MCF 10A (cell line): ENCODE measurements at regions of chr1 and their contacts with region 1.

Region 1: DNA sequence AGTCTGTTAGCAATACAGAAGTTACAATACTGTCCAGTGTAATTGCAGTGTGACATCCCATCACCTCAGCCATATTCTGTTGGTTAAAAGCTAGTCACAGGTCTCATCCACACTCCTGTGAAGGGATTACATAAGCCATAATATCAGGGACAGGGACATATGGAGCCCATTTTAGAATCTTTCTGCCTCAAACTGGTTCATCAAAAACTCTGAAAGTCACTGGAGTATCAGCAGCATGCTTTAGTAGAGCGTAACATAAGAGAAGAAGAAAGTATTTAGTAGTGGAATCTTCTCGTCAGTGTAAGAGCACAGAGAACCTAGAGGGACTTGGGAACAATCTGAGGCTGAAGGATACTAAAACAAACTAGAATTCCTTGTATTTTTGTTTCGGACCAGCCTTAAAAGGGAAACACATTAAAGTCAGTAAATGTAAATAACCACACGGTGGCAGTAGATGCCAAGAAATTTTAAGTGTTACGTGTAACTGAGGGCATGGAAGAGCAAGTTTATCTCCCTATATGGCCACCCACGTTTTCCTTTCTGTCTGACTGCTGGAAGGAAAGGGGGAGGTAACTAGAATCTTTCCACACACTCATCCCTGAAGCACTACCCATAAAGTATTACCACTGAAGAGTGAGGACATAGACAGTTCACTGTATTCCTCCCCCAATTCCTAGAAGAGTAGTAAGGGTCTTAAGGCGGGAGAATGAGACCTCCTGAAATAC is 41.6 kb upstream of the AGL start:
- DNase-seq: peak; percentile 90
- H3K4me3 Mint-ChIP-seq: no peak overlapping the region
- H3K27ac Mint-ChIP-seq: no peak overlapping the region
- H3K4me1 Mint-ChIP-seq: no peaks in the 10 kb centered on the region
- H3K27me3 Mint-ChIP-seq: no peaks in the 10 kb centered on the region
- CTCF ChIP-seq: peak; percentile 49

Region 2: GRCh38 chr1:99820546-99820945 is 12.0 kb after region 1 on chr1:
- CTCF ChIA-PET with region 1: interaction called, 13 read pairs
- POLR2A ChIA-PET with region 1: no interaction called
- intact Hi-C with region 1: no loop called
- DNase-seq: no peak
- H3K4me3 Mint-ChIP-seq: no peak overlapping the region
- H3K27ac Mint-ChIP-seq: no peak overlapping the region
- H3K4me1 Mint-ChIP-seq: no peaks in the 10 kb centered on the region
- H3K27me3 Mint-ChIP-seq: peaks cover 9% of the 10 kb centered on the region
- CTCF ChIP-seq: no peak

Region 3: GRCh38 chr1:100132566-100133477 is 324.3 kb after region 1 on chr1 and contains the starts of genes SASS6 and TRMT13:
- CTCF ChIA-PET with region 1: no interaction called
- POLR2A ChIA-PET with region 1: no interaction called
- intact Hi-C with region 1: loop called (anchors 5 kb)
- DNase-seq: peak; percentile 98
- H3K4me3 Mint-ChIP-seq: peak within 1 kb of the TSS; percentile 86
- H3K27ac Mint-ChIP-seq: peak within 1 kb of the TSS; percentile 75
- H3K4me1 Mint-ChIP-seq: peaks cover 19% of the 10 kb centered on the region
- H3K27me3 Mint-ChIP-seq: no peaks in the 10 kb centered on the region
- CTCF ChIP-seq: no peak
- total RNA-seq, gene SASS6: 6.6 and 7.5 TPM in 2 replicates
- total RNA-seq, gene TRMT13: 24.2 and 25.5 TPM in 2 replicates

Region 4: GRCh38 chr1:100358210-100358609 is 549.7 kb after region 1 on chr1:
- CTCF ChIA-PET with region 1: no interaction called
- POLR2A ChIA-PET with region 1: no interaction called
- intact Hi-C with region 1: loop called (anchors 1 kb)
- DNase-seq: peak; percentile 25
- H3K4me3 Mint-ChIP-seq: no peak overlapping the region
- H3K27ac Mint-ChIP-seq: no peak overlapping the region
- H3K4me1 Mint-ChIP-seq: peaks cover 21% of the 10 kb centered on the region
- H3K27me3 Mint-ChIP-seq: no peaks in the 10 kb centered on the region
- CTCF ChIP-seq: no peak

Region 5: DNA sequence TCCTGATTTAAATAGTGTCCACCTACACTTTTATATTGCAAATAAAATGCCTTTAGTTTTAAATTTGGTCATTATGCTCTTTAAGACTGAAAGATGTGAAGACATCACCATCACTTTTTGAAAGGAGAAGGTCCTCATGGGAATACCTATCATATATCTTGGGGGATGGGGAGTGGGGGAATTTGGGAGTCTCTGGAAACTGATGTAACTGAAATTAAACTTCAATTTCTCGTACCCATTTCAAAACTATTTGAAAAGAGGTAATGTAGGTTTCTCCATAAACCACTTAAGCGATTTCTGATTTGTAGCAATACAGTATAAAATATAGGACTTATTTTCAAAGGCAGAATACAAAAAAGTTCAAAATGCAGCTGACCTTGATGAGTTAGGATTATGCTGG is 1085.2 kb after region 1 on chr1:
- CTCF ChIA-PET with region 1: no interaction called
- POLR2A ChIA-PET with region 1: no interaction called
- intact Hi-C with region 1: no loop called
- DNase-seq: peak; percentile 1
- H3K4me3 Mint-ChIP-seq: peak overlapping the region; percentile 96
- H3K27ac Mint-ChIP-seq: peak overlapping the region; percentile 99
- H3K4me1 Mint-ChIP-seq: peaks cover 6% of the 10 kb centered on the region
- H3K27me3 Mint-ChIP-seq: no peaks in the 10 kb centered on the region
- CTCF ChIP-seq: no peak